GM13976 (cell line): ENCODE measurements at regions of chr12 and their contacts with region 1.

Region 1: GRCh38 chr12:121688966-121689365 is 19.5 kb upstream of the MORN3 start:
- DNase-seq: no peak
- CTCF ChIP-seq: no peak

Region 2: GRCh38 chr12:121543786-121544185 is 145.2 kb before region 1 on chr12:
- in situ Hi-C with region 1: loop called (anchors 10 kb)
- DNase-seq: no peak
- CTCF ChIP-seq: no peak